Endothelial cell of umbilical vein (primary cell): ENCODE measurements at regions of chr13 and their contacts with region 1.

Region 1: GRCh38 chr13:36912973-36913372 is 7.1 kb downstream of the SMAD9 start:
- DNase-seq: no peak
- H3K4me3 ChIP-seq: no peak overlapping the region
- H3K27ac ChIP-seq: no peak overlapping the region
- H3K4me1 ChIP-seq: peaks cover 12% of the 10 kb centered on the region
- H3K27me3 ChIP-seq: no peaks in the 10 kb centered on the region
- CTCF ChIP-seq: no peak
- POLR2A ChIP-seq: no peak

Region 2: GRCh38 chr13:36891752-36892151 is 21.2 kb before region 1 on chr13:
- CTCF ChIA-PET with region 1: interaction called, 3 read pairs
- POLR2A ChIA-PET with region 1: no interaction called
- dilution Hi-C with region 1: no loop called
- intact Hi-C with region 1: loop called (anchors 2 kb)
- DNase-seq: no peak
- H3K4me3 ChIP-seq: no peak overlapping the region
- H3K27ac ChIP-seq: no peak overlapping the region
- H3K4me1 ChIP-seq: peaks cover 15% of the 10 kb centered on the region
- H3K27me3 ChIP-seq: no peaks in the 10 kb centered on the region
- CTCF ChIP-seq: no peak
- POLR2A ChIP-seq: no peak

Region 3: GRCh38 chr13:36999054-36999714 is 86.2 kb after region 1 on chr13 and contains the start of gene ALG5:
- CTCF ChIA-PET with region 1: no interaction called
- POLR2A ChIA-PET with region 1: no interaction called
- dilution Hi-C with region 1: no loop called
- intact Hi-C with region 1: no loop called
- DNase-seq: peak; percentile 94
- H3K4me3 ChIP-seq: peak within 1 kb of the TSS; percentile 89 to 97 (median 94)
- H3K27ac ChIP-seq: peak within 1 kb of the TSS; percentile 94
- H3K4me1 ChIP-seq: peaks cover 21% of the 10 kb centered on the region
- H3K27me3 ChIP-seq: no peaks in the 10 kb centered on the region
- CTCF ChIP-seq: peak; percentile 81 to 99
- POLR2A ChIP-seq: peak; percentile 94
- total RNA-seq, gene ALG5: 29.3 and 31.3 TPM in 2 replicates